ENCODE measurements at regions of chr1 and their contacts with region 1.

Region 1: DNA sequence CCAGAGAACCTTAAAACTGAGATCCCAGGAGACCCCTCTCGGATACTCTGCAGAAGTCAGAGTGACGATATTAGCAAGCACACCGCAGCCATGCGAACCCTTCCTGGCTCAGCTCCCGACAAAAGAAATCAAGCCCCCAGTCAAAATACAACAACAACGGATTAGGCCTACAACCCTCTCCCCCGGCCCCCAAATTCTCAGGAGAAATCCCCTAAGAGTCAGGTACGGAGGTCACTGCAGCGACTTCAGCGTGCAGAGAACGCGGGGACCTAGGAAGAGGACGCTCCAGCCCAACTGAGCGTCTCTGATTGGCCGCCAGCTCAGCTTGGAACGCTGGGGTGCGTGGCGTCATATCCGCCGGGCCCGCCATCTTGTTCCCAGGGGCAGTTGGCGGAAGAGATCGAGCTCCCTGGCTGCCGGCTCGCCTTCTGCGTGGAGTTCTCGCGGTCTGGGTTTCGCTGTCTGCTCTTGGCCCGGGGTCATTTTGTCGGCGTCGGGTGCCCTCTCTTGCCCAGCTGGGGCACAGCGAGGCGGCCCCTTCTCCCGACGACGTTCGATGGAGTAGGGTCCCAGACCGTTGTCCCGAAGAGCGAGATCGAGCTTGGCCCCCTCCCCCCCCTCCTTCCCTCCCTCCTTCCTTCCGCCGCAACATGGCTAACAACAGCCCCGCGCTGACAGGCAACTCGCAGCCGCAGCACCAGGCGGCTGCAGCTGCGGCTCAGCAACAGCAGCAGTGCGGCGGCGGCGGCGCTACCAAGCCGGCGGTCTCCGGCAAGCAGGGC is at the start of gene PRPF38B:
- DNase-seq: peak; percentile 87
- ATAC-seq: peak; percentile 96
- H3K4me3 ChIP-seq: peak within 1 kb of the TSS; percentile 87 to 95 (median 93)
- H3K27ac ChIP-seq: peak within 1 kb of the TSS; percentile 94
- H3K4me1 ChIP-seq: peaks cover 45% of the 10 kb centered on the region
- H3K27me3 ChIP-seq: no peaks in the 10 kb centered on the region; a peak in 1 of 5 replicates
- CTCF ChIP-seq: peak; percentile 17; the same call in 1 of the 2 replicates
- EP300 ChIP-seq: no peak
- POLR2A ChIP-seq: peak; percentile 92 to 94
- RAD21 ChIP-seq: no peak; the same call in 1 of the 2 replicates
- total RNA-seq, gene PRPF38B: 14.3 and 25.7 TPM in 2 replicates

Region 2: DNA sequence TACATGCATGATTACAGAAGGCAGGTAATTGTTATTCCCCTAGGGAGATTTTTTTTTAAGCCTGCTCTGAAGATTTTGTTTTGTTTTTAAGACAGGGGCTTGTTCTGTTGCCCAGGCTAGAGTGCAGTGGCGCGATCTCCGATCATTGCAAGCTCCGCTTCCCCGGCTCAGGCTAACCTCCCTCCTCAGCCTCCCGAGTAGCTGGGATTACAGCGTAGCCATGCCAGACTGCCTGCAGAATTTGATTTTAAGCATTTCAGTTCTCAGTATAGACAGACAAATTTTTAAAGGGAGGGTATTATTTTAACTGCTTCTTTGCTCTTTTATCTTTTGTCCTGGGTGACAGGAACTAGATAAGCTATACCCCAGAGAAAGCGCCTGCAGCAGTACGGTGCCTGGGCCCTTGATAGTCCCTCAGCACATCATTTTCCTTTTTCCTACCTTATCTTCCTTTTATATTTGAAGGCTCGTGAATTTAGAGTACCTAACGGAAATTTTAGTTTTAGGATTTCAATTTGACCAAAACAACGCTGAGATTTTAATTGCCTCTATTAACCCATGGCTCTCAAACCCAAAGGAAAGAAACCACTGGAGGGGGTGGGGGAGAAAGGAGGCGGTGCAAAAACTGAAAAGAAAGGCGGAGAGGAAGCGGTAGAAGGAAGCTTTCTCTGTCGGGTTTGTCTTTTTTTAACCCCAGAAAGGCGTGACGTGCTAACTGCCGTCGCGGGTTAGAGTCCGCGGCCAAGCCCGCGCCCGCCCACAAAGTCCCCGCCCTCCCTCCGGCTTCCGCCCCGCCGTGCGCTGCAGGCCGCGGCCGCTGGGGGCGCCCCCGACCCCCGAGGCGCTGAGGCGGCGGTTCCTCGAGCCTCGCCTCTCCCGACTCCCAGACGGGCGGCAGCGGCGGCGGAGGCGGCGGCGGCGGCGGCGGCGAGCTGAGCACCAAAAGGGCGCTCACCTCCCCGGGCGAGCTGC is 132.6 kb before region 1 on chr1 and contains the start of gene EEIG2:
- CTCF ChIA-PET with region 1: no interaction called
- POLR2A ChIA-PET with region 1: interaction called, 9 read pairs
- in situ Hi-C with region 1: no loop called
- intact Hi-C with region 1: loop called (anchors 5 kb)
- DNase-seq: peak; percentile 48
- ATAC-seq: peak; percentile 89
- H3K4me3 ChIP-seq: peak within 1 kb of the TSS; percentile 54 to 77 (median 65)
- H3K27ac ChIP-seq: no peak within 1 kb of the TSS
- H3K4me1 ChIP-seq: peaks cover 21% of the 10 kb centered on the region
- H3K27me3 ChIP-seq: peaks cover 0 to 3% of the 10 kb centered on the region in 2 experiments; a peak in 1 of 5 replicates
- CTCF ChIP-seq: peak; percentile 69
- EP300 ChIP-seq: no peak
- POLR2A ChIP-seq: no peak
- RAD21 ChIP-seq: no peak
- total RNA-seq, gene EEIG2: 3.2 and 5.7 TPM in 2 replicates

Region 3: DNA sequence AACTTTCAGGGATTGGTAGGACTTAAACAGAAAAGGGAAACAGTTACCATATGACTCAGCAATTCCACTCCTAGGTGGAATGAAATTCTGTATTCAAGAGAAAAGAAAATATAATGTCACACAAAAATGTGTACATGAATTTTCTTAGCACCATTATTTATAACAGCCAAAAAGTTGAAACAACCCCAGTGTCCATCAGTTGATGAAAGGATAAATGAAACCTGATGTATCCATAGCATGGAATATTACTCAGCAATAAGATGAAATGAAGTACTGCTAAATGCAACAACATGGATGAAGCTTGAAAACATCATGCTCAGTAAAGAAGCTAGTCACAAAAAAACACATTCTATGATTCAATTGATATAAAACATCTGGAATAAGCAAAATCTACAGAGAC is 116.8 kb before region 1 on chr1:
- CTCF ChIA-PET with region 1: no interaction called
- POLR2A ChIA-PET with region 1: no interaction called
- in situ Hi-C with region 1: no loop called
- intact Hi-C with region 1: no loop called
- DNase-seq: no peak
- ATAC-seq: no peak
- H3K4me3 ChIP-seq: no peak overlapping the region
- H3K27ac ChIP-seq: no peak overlapping the region
- H3K4me1 ChIP-seq: peaks cover 19% of the 10 kb centered on the region
- H3K27me3 ChIP-seq: no peaks in the 10 kb centered on the region
- CTCF ChIP-seq: no peak
- EP300 ChIP-seq: no peak
- POLR2A ChIP-seq: no peak
- RAD21 ChIP-seq: no peak

Region 4: DNA sequence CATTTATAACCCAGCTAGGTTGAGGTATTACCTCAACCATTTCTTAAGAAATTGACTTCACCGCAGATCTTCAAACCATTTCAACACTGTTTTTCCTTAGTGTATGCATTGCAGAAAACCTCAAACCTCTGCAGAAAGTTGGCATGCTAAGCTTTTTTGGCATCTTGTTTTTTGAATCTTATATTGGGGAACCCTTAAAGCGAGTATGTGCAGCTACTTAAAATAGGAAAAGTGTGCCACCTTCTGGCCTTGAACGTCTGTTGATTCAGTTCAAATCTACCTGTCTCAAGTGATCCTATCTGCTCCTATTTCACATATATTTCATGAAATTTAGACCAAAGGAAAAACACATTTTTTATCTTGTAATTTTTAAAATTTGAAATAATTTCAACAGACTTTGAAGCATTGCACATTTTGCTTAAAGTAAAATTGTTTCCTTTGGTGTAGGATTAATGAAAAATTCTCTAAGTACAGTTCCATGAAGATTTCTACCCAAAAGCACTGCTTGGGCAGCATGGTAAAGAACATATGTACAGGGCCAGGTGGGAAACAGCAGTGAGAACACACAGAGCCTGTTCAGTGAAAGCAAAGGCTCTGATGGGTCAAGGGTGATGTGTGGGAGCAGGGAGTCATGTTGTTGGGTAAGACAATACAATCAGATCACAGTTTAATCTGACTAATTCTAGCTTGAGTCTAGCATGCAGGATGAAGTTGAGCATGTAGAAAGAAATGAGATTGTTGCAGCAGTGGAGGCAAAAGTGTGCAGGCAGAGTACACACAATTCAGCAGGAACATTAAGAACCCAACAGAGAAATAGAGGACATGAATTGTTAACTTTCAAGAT is 48.4 kb before region 1 on chr1:
- CTCF ChIA-PET with region 1: no interaction called
- POLR2A ChIA-PET with region 1: interaction called, 28 read pairs
- in situ Hi-C with region 1: no loop called
- intact Hi-C with region 1: loop called (anchors 2 kb)
- DNase-seq: peak; percentile 37
- ATAC-seq: peak; percentile 52; the same call in 2 of the 3 replicates
- H3K4me3 ChIP-seq: no peak overlapping the region
- H3K27ac ChIP-seq: no peak overlapping the region
- H3K4me1 ChIP-seq: peaks cover 34% of the 10 kb centered on the region
- H3K27me3 ChIP-seq: no peaks in the 10 kb centered on the region
- CTCF ChIP-seq: peak; percentile 66
- EP300 ChIP-seq: no peak
- POLR2A ChIP-seq: no peak
- RAD21 ChIP-seq: no peak

Region 5: GRCh38 chr1:108678706-108679105 is 13.4 kb before region 1 on chr1:
- CTCF ChIA-PET with region 1: no interaction called
- POLR2A ChIA-PET with region 1: interaction called, 18 read pairs
- in situ Hi-C with region 1: no loop called
- intact Hi-C with region 1: no loop called
- DNase-seq: no peak
- ATAC-seq: no peak
- H3K4me3 ChIP-seq: no peak overlapping the region
- H3K27ac ChIP-seq: no peak overlapping the region
- H3K4me1 ChIP-seq: no peaks in the 10 kb centered on the region
- H3K27me3 ChIP-seq: no peaks in the 10 kb centered on the region
- CTCF ChIP-seq: no peak
- EP300 ChIP-seq: no peak
- POLR2A ChIP-seq: no peak
- RAD21 ChIP-seq: no peak

Region 6: GRCh38 chr1:108703939-108704900 is 12.1 kb after region 1 on chr1:
- CTCF ChIA-PET with region 1: no interaction called
- POLR2A ChIA-PET with region 1: interaction called, 11 read pairs
- in situ Hi-C with region 1: no loop called
- intact Hi-C with region 1: no loop called
- DNase-seq: no peak
- ATAC-seq: peak; percentile 8
- H3K4me3 ChIP-seq: no peak overlapping the region
- H3K27ac ChIP-seq: no peak overlapping the region
- H3K4me1 ChIP-seq: no peaks in the 10 kb centered on the region
- H3K27me3 ChIP-seq: no peaks in the 10 kb centered on the region; a peak in 2 of 5 replicates
- CTCF ChIP-seq: no peak
- EP300 ChIP-seq: no peak
- POLR2A ChIP-seq: no peak; a peak in 1 of 4 replicates
- RAD21 ChIP-seq: no peak

Region 7: DNA sequence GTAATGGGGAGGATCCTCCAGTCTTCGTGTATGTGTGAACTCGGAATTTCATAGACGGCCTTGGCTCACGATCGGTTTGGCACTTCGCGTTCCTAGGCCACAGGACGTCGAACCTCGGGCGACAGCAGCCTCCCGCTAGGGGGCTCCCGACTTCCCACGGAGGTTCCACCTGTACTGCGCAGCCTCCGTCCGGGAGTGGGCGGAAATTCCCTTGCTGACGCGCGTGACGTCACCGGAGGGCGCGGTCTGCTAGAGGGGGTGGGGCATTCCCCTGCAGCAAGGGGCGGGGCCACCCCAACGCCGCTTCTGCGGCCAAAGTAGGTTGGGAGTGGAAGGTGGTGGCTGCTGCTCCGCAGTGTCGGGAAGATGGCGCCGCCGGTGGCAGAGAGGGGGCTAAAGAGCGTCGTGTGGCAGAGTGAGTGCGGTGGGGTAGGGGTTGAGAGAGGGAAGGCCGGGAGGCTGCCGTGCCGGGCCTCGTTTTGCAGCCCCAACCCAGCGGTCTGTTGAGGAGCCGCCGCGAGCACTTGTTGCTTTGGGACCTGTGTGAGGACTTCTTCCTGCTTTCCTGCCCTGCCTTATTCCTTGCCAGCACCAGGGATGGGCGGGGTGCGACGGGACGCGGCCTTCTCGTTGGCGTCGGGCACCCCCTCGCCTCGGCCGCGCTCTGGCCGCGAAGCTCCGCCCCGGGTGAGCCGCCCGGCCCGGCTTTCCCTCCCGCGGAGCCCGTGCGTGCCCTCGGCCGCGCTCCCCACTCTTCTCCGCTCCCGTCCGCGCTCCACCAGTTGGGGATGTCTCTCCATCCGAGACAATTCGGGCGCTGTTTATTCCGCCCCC is 54.5 kb after region 1 on chr1 and contains the start of gene STXBP3:
- CTCF ChIA-PET with region 1: no interaction called
- POLR2A ChIA-PET with region 1: interaction called, 9 read pairs
- in situ Hi-C with region 1: no loop called
- intact Hi-C with region 1: loop called (anchors 1 kb)
- DNase-seq: peak; percentile 91
- ATAC-seq: peak; percentile 93
- H3K4me3 ChIP-seq: peak within 1 kb of the TSS; percentile 80 to 99 (median 90)
- H3K27ac ChIP-seq: peak within 1 kb of the TSS; percentile 91
- H3K4me1 ChIP-seq: peaks cover 14% of the 10 kb centered on the region
- H3K27me3 ChIP-seq: peaks cover 0 to 11% of the 10 kb centered on the region in 2 experiments; a peak in 1 of 5 replicates
- CTCF ChIP-seq: peak; percentile 98
- EP300 ChIP-seq: peak in 1 of 2 experiments; percentile 14; a peak in 1 of 4 replicates
- POLR2A ChIP-seq: peak; percentile 94 to 96
- RAD21 ChIP-seq: no peak; the same call in 1 of the 2 replicates
- total RNA-seq, gene STXBP3: 20.8 and 31.6 TPM in 2 replicates